ENCODE measurements at regions of chr17 and their contacts with region 1.

Region 1: GRCh38 chr17:35764123-35764991 is 3.7 kb downstream of the C17orf50 start:
- DNase-seq: peak; percentile 78 to 84 (median 78)
- H3K4me3 ChIP-seq: peak overlapping the region; percentile 54 to 57
- H3K4me3 Mint-ChIP-seq: peak overlapping the region; percentile 89 to 98 (median 95)
- H3K27ac ChIP-seq: peak overlapping the region; percentile 15
- H3K27ac Mint-ChIP-seq: peak overlapping the region; percentile 59 to 93 (median 83)
- H3K4me1 ChIP-seq: peaks cover 6% of the 10 kb centered on the region
- H3K4me1 Mint-ChIP-seq: peaks cover 1 to 13% (median 6%) of the 10 kb centered on the region in 4 donors
- H3K27me3 ChIP-seq: no peaks in the 10 kb centered on the region
- H3K27me3 Mint-ChIP-seq: no peaks in the 10 kb centered on the region

Region 2: DNA sequence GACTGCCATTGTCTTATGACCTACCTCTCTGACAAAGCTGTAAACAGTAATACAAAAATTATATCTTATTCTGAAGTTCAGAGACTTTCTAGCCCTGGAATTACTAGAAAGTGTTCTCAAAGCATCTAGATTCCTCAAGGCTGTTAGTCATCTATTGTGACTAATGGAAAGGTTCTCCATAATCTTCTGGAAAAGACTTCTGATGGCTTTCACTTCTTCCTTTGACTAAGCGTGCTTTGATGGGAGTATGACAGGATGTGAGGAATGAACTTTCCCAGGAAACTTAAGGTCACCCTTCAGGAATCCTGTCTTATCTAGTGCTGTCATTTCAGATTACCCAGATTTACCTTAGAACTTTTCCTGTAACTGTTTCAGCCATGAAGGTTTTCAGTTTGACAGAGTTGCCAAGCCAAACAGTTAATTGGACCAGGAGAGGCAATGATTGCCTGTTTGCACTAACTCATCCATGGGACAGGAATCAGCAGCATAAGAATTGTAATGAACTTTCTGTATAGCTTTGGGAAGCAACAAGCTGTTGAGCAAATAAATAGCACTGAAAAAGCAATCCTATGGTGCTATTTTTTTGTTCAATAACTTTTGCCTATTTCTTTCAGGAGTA is 133.7 kb before region 1 on chr17:
- CTCF ChIA-PET with region 1: no interaction called
- POLR2A ChIA-PET with region 1: no interaction called
- intact Hi-C with region 1: no loop called
- DNase-seq: no peak
- H3K4me3 ChIP-seq: no peak overlapping the region
- H3K4me3 Mint-ChIP-seq: no peak overlapping the region
- H3K27ac ChIP-seq: no peak overlapping the region
- H3K27ac Mint-ChIP-seq: peak overlapping the region in 2 of 7 donors; percentile 36 to 37
- H3K4me1 ChIP-seq: no peaks in the 10 kb centered on the region
- H3K4me1 Mint-ChIP-seq: peaks cover 0 to 5% (median 3%) of the 10 kb centered on the region in 4 donors
- H3K27me3 ChIP-seq: no peaks in the 10 kb centered on the region
- H3K27me3 Mint-ChIP-seq: no peaks in the 10 kb centered on the region

Region 3: GRCh38 chr17:35666967-35667532 is 97.3 kb before region 1 on chr17:
- CTCF ChIA-PET with region 1: no interaction called
- POLR2A ChIA-PET with region 1: no interaction called
- intact Hi-C with region 1: no loop called
- DNase-seq: no peak
- H3K4me3 ChIP-seq: no peak overlapping the region
- H3K4me3 Mint-ChIP-seq: no peak overlapping the region
- H3K27ac ChIP-seq: no peak overlapping the region
- H3K27ac Mint-ChIP-seq: peak overlapping the region in 2 of 7 donors; percentile 19 to 60
- H3K4me1 ChIP-seq: no peaks in the 10 kb centered on the region
- H3K4me1 Mint-ChIP-seq: peaks cover 0 to 9% (median 5%) of the 10 kb centered on the region in 4 donors
- H3K27me3 ChIP-seq: no peaks in the 10 kb centered on the region
- H3K27me3 Mint-ChIP-seq: no peaks in the 10 kb centered on the region

Region 4: GRCh38 chr17:35774499-35774898 is 10.1 kb after region 1 on chr17:
- CTCF ChIA-PET with region 1: interaction called, 29 read pairs
- POLR2A ChIA-PET with region 1: no interaction called
- intact Hi-C with region 1: no loop called
- DNase-seq: no peak
- H3K4me3 ChIP-seq: no peak overlapping the region
- H3K4me3 Mint-ChIP-seq: no peak overlapping the region
- H3K27ac ChIP-seq: no peak overlapping the region
- H3K27ac Mint-ChIP-seq: no peak overlapping the region
- H3K4me1 ChIP-seq: no peaks in the 10 kb centered on the region
- H3K4me1 Mint-ChIP-seq: no peaks in the 10 kb centered on the region
- H3K27me3 ChIP-seq: no peaks in the 10 kb centered on the region
- H3K27me3 Mint-ChIP-seq: peaks cover 1 to 24% of the 10 kb centered on the region in 2 donors

Region 5: DNA sequence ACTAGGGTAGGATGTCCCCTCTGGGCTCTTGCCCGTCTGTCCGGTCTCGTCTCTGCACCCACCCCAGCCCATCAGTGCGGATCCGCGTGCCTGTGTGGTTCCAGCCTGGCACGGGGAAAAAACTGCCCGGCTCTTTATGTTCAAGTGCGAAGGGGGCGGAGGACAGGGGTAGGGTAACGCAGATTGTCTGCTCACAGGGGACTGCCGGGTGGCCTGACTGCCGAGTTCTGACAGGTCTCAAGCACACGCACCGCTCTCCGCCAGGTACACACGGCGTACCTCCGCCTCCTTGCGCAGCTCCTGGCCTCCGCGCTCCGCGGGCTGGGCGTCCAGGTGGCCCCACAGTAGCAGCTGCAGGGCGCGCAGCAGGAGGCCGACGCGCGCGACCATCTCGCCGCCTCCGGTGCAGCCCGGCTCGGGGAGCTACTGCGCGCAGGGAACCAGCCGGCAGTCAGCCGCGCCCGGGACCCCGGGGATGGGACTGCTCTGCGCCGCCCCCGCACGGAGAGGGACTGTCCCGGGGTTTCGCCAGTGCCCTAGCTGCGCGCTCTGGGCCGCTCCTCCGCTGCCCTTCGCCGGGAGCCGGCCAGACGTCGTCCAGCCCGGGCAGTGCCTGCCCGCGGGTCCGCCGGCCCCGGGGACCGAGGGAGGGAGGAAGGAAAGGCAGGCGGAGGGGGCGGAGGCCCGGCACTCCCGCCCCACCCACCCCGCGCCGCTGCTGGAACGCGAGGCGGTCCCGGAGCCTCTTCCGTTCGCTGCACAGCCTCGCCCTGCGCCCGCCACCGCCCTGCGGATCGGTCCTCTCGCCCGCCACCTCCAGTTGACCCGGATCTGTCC is 30.8 kb after region 1 on chr17 and contains the start of gene MMP28:
- CTCF ChIA-PET with region 1: interaction called, 48 read pairs
- POLR2A ChIA-PET with region 1: interaction called, 5 read pairs
- intact Hi-C with region 1: no loop called
- DNase-seq: peak in 4 of 5 donors; percentile 18 to 33 (median 28)
- H3K4me3 ChIP-seq: peak within 1 kb of the TSS in 1 of 2 donors; percentile 54
- H3K4me3 Mint-ChIP-seq: peak within 1 kb of the TSS; percentile 72 to 85 (median 76)
- H3K27ac ChIP-seq: no peak within 1 kb of the TSS
- H3K27ac Mint-ChIP-seq: no peak within 1 kb of the TSS
- H3K4me1 ChIP-seq: peaks cover 12% of the 10 kb centered on the region
- H3K4me1 Mint-ChIP-seq: peaks cover 0 to 14% (median 7%) of the 10 kb centered on the region in 4 donors
- H3K27me3 ChIP-seq: peaks cover 12% of the 10 kb centered on the region
- H3K27me3 Mint-ChIP-seq: peaks cover 21 to 36% of the 10 kb centered on the region in 2 donors
- total RNA-seq, gene MMP28: 0.64 to 0.96 TPM

Region 6: GRCh38 chr17:35819456-35819855 is 55.1 kb after region 1 on chr17:
- CTCF ChIA-PET with region 1: interaction called, 46 read pairs
- POLR2A ChIA-PET with region 1: interaction called, 6 read pairs
- intact Hi-C with region 1: no loop called
- DNase-seq: no peak
- H3K4me3 ChIP-seq: no peak overlapping the region
- H3K4me3 Mint-ChIP-seq: no peak overlapping the region
- H3K27ac ChIP-seq: no peak overlapping the region
- H3K27ac Mint-ChIP-seq: peak overlapping the region in 1 of 7 donors; percentile 61
- H3K4me1 ChIP-seq: peaks cover 37% of the 10 kb centered on the region
- H3K4me1 Mint-ChIP-seq: peaks cover 24 to 50% (median 41%) of the 10 kb centered on the region in 4 donors
- H3K27me3 ChIP-seq: no peaks in the 10 kb centered on the region
- H3K27me3 Mint-ChIP-seq: no peaks in the 10 kb centered on the region

Region 7: DNA sequence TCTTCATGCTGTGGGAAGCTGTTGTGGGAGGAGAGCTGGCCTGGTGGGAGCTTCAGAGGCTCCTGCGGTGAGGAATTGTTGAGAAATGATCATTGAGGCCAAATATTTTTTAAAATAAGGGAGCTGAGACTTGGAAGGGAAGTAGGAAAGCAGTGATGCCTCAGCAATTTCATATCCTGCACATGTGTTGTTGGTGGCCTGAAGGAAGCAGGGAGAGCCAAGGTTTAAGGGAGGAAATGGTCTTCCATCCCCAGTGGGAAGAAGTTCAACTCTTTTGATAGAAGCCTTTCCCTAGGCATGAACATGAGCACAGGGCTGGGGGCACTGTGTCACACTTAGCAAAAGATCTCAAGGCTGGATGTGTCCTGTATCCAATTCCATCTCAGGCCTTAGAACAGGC is 222.3 kb after region 1 on chr17 and contains the start of gene CCL14:
- CTCF ChIA-PET with region 1: no interaction called
- POLR2A ChIA-PET with region 1: no interaction called
- intact Hi-C with region 1: no loop called
- DNase-seq: no peak
- H3K4me3 ChIP-seq: no peak within 1 kb of the TSS
- H3K4me3 Mint-ChIP-seq: no peak within 1 kb of the TSS
- H3K27ac ChIP-seq: no peak within 1 kb of the TSS
- H3K27ac Mint-ChIP-seq: no peak within 1 kb of the TSS
- H3K4me1 ChIP-seq: no peaks in the 10 kb centered on the region
- H3K4me1 Mint-ChIP-seq: no peaks in the 10 kb centered on the region
- H3K27me3 ChIP-seq: no peaks in the 10 kb centered on the region
- H3K27me3 Mint-ChIP-seq: peaks cover 2 to 5% of the 10 kb centered on the region in 2 donors
- total RNA-seq, gene CCL14: not detected

Region 8: GRCh38 chr17:36148559-36149295 is 384.4 kb after region 1 on chr17:
- CTCF ChIA-PET with region 1: interaction called, 16 read pairs
- POLR2A ChIA-PET with region 1: no interaction called
- intact Hi-C with region 1: no loop called
- DNase-seq: peak; percentile 44 to 66 (median 57)
- H3K4me3 ChIP-seq: no peak overlapping the region
- H3K4me3 Mint-ChIP-seq: peak overlapping the region in 1 of 8 donors; percentile 64
- H3K27ac ChIP-seq: no peak overlapping the region
- H3K27ac Mint-ChIP-seq: no peak overlapping the region
- H3K4me1 ChIP-seq: no peaks in the 10 kb centered on the region
- H3K4me1 Mint-ChIP-seq: peaks cover 0 to 3% (median under 1%) of the 10 kb centered on the region in 4 donors
- H3K27me3 ChIP-seq: no peaks in the 10 kb centered on the region
- H3K27me3 Mint-ChIP-seq: peaks cover 9 to 26% of the 10 kb centered on the region in 2 donors